Sigmoid colon (tissue), 7 donors: ENCODE measurements at regions of chr4 and their contacts with region 1.

Region 1: DNA sequence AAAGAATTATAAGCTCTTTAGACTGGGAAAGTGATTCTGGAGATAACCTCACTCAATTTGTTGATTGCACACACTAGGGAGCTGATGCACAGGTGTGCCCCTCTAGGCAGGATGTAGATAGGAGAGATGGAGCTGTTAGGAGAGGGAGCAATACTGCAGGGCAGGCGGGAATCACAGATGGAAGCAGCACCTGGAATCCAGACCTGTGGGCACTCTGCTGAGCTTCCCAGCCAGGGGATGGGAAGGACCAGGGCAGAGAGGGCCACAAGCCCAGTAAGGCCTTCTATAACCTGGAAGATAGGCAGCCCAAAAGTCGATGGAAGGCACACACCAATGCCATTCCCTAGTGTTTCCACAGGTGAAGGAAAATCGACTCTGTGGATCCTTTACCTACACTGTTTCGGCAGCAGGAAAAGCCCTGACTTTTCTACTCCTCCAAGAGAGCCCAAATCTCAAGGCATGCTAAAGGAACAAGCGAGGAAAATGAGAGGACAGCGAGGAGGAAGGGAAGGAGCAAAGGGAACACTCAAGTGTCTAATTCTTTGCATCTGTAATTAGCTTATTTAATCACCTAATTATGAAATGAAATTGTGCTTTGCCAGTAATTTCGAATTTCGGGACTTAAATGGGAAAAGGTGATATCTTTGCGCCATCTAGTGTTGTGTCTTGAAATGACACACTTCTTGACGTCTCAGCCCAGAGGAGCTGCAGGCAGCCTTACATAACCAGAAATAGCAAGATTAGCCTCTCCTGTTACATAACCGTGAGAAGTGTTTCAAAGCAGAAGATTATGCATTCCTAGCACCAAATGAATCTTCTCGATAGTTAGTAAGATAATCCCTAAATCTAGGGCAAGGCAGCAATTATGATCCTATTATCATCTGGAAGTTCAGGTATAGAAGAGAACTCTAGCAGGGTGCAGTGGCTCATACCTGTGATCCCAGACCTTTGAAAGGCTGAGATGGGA is 31.0 kb upstream of the TLR3 start:
- DNase-seq: peak; percentile 82
- H3K4me3 ChIP-seq: no peak overlapping the region
- H3K27ac ChIP-seq: peak overlapping the region; percentile 68 to 87 (median 74)
- H3K4me1 ChIP-seq: peaks cover 0 to 30% (median 18%) of the 10 kb centered on the region in 4 donors
- H3K27me3 ChIP-seq: no peaks in the 10 kb centered on the region
- CTCF ChIP-seq: peak; percentile 76 to 85 (median 80)
- EP300 ChIP-seq: no peak
- POLR2A ChIP-seq: no peak

Region 2: GRCh38 chr4:185142912-185143595 is 894.9 kb before region 1 on chr4 and contains the start of gene SLC25A4:
- intact Hi-C with region 1: loop called (anchors 5 kb)
- DNase-seq: peak; percentile 94
- H3K4me3 ChIP-seq: peak within 1 kb of the TSS; percentile 60 to 81 (median 78)
- H3K27ac ChIP-seq: peak within 1 kb of the TSS; percentile 88 to 98 (median 94)
- H3K4me1 ChIP-seq: peaks cover 0 to 41% (median 34%) of the 10 kb centered on the region in 4 donors
- H3K27me3 ChIP-seq: no peaks in the 10 kb centered on the region
- CTCF ChIP-seq: peak in 3 of 4 experiments; percentile 15 to 57 (median 50)
- EP300 ChIP-seq: peak in 1 of 4 donors; percentile 7
- POLR2A ChIP-seq: peak; percentile 62
- total RNA-seq, gene SLC25A4: 89.1 to 127 (median 112) TPM

Region 3: GRCh38 chr4:185425647-185426352 is 612.2 kb before region 1 on chr4 and contains the start of gene UFSP2:
- intact Hi-C with region 1: loop called (anchors 5 kb)
- DNase-seq: peak; percentile 95
- H3K4me3 ChIP-seq: peak within 1 kb of the TSS; percentile 57 to 84 (median 73)
- H3K27ac ChIP-seq: peak within 1 kb of the TSS; percentile 91 to 95 (median 92)
- H3K4me1 ChIP-seq: peaks cover 0 to 41% (median 19%) of the 10 kb centered on the region in 4 donors
- H3K27me3 ChIP-seq: no peaks in the 10 kb centered on the region
- CTCF ChIP-seq: no peak
- EP300 ChIP-seq: peak in 2 of 4 donors; percentile 43 to 56
- POLR2A ChIP-seq: peak; percentile 64 to 70
- total RNA-seq, gene UFSP2: 31.3 to 56.0 (median 48.6) TPM

Region 4: GRCh38 chr4:185534866-185535611 is 502.9 kb before region 1 on chr4 and contains the start of gene PDLIM3:
- intact Hi-C with region 1: loop called (anchors 10 kb)
- DNase-seq: peak; percentile 89
- H3K4me3 ChIP-seq: peak within 1 kb of the TSS; percentile 67 to 91 (median 82)
- H3K27ac ChIP-seq: peak within 1 kb of the TSS; percentile 95 to 99 (median 97)
- H3K4me1 ChIP-seq: peaks cover 0 to 45% (median 23%) of the 10 kb centered on the region in 4 donors
- H3K27me3 ChIP-seq: peaks cover 0 to 10% (median 0%) of the 10 kb centered on the region in 3 donors
- CTCF ChIP-seq: no peak
- EP300 ChIP-seq: peak in 1 of 4 donors; percentile 43
- POLR2A ChIP-seq: peak; percentile 90 to 93
- total RNA-seq, gene PDLIM3: 568 to 907 (median 820) TPM

Region 5: GRCh38 chr4:185640811-185641675 is 396.9 kb before region 1 on chr4:
- intact Hi-C with region 1: loop called (anchors 2 kb)
- DNase-seq: no peak
- H3K4me3 ChIP-seq: no peak overlapping the region
- H3K27ac ChIP-seq: peak overlapping the region; percentile 4 to 78 (median 69)
- H3K4me1 ChIP-seq: peaks cover 0 to 59% (median 33%) of the 10 kb centered on the region in 4 donors
- H3K27me3 ChIP-seq: no peaks in the 10 kb centered on the region
- CTCF ChIP-seq: peak; percentile 27 to 50 (median 42)
- EP300 ChIP-seq: no peak
- POLR2A ChIP-seq: no peak

Region 6: DNA sequence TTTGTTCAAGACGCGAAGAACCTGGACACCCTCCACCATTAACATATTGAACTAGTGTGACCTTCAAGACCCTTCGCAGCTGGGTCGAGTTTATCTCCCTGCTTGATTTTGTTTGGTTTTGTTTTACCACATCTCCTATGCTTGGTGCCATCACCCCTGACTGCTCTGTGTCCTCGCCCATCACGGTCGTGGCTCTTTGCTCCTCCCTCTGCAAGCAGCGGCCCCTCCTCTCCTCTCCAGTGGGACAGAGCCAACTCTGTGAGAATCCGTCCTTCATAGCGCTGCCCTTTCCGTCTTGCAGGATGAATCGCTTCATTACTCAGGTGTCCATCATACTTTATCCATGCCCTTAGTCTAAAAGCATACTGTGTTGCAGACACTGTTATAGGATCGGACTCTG is 57.4 kb after region 1 on chr4:
- intact Hi-C with region 1: no loop called
- DNase-seq: no peak
- H3K4me3 ChIP-seq: no peak overlapping the region
- H3K27ac ChIP-seq: no peak overlapping the region
- H3K4me1 ChIP-seq: peaks cover 0 to 14% (median 6%) of the 10 kb centered on the region in 4 donors
- H3K27me3 ChIP-seq: no peaks in the 10 kb centered on the region
- CTCF ChIP-seq: no peak
- EP300 ChIP-seq: no peak
- POLR2A ChIP-seq: no peak

Region 7: GRCh38 chr4:186240848-186241491 is 203.0 kb after region 1 on chr4:
- intact Hi-C with region 1: no loop called
- DNase-seq: no peak
- H3K4me3 ChIP-seq: no peak overlapping the region
- H3K27ac ChIP-seq: no peak overlapping the region
- H3K4me1 ChIP-seq: no peaks in the 10 kb centered on the region
- H3K27me3 ChIP-seq: no peaks in the 10 kb centered on the region
- CTCF ChIP-seq: no peak
- EP300 ChIP-seq: no peak
- POLR2A ChIP-seq: no peak